ACHN (cell line): ENCODE measurements at regions of chr18 and their contacts with region 1.

Region 1: GRCh38 chr18:63320046-63320689 is 599 bp upstream of the BCL2 start:
- DNase-seq: peak; percentile 86

Region 2: GRCh38 chr18:63074981-63075404 is 245.2 kb before region 1 on chr18:
- in situ Hi-C with region 1: no loop called
- DNase-seq: peak; percentile 47

Region 3: DNA sequence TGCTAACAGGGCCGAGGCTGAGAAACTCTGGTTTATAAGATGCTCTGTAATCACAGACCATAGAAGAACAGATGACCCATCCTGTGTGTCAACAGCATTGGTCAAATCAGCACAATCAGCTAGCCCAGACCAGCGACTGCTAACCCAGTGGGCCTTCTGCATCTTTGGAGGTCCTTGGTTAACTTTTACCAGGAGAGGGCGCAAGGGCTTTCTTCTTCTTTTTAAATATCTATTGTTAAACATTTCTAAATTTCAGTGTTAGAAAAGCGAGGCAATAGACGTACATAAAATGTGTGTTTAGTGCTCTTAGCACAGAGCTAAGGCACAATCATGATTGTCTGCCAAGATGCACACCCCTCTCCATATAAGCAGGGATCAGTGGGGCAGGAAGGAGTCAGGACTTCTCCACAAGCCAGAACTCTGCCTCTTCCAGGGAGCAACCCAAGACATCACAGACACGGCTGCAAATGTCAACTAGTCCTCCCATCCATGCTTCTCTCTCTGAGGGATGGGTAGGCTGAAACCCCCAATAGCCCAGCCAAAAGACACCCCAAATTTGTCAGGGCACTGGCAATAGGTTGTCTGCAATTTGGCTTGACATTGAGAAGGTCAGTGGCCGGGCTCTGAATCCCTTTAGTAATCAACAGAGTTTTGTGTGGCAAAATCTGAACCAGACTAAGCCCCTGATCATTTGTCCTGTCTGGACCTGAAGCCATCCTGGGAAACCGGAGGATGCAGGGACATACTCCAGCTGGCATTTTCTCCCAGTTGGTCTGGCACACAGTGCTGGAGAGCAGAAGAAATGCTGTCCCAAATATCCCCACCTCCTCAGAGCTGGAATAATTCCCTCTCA is 188.8 kb before region 1 on chr18:
- in situ Hi-C with region 1: loop called (anchors 25 kb)
- DNase-seq: peak; percentile 54

Region 4: DNA sequence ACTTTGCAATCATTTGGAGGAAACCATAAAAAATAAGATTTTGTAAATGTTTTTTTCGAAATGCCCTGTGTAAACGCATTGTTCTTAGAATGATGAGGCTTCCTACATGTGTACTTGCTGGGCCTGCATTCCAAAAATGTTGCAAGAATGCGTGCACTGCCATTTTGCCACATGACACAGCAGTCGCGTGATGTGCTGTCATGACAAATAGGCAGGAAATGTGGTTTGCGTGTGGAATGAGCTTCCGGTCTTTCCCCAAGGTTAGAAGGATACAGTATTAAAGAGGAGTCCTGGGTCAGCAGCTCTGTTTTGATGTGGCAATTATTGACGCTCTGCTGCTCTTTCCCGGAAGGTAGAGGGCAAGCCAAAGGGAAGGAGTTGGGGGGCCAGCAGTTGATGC is 549.2 kb after region 1 on chr18:
- in situ Hi-C with region 1: no loop called
- DNase-seq: no peak